ENCODE measurements at regions of chrX and their contacts with region 1.

Region 1: GRCh38 chrX:12984629-12985319 is 9.9 kb downstream of the TMSB4X start:
- DNase-seq: peak in 10 of 14 experiments; percentile 35 to 80 (median 52)
- ATAC-seq: peak; percentile 77
- H3K4me3 ChIP-seq: peak overlapping the region; percentile 12
- H3K4me3 Mint-ChIP-seq: peak overlapping the region; percentile 82
- H3K27ac ChIP-seq: peak overlapping the region; percentile 66 to 69
- H3K27ac Mint-ChIP-seq: peak overlapping the region; percentile 95
- H3K4me1 ChIP-seq: peaks cover 80% of the 10 kb centered on the region
- H3K4me1 Mint-ChIP-seq: peaks cover 76% of the 10 kb centered on the region
- H3K27me3 ChIP-seq: no peaks in the 10 kb centered on the region
- H3K27me3 Mint-ChIP-seq: no peaks in the 10 kb centered on the region
- CTCF ChIP-seq: no peak

Region 2: DNA sequence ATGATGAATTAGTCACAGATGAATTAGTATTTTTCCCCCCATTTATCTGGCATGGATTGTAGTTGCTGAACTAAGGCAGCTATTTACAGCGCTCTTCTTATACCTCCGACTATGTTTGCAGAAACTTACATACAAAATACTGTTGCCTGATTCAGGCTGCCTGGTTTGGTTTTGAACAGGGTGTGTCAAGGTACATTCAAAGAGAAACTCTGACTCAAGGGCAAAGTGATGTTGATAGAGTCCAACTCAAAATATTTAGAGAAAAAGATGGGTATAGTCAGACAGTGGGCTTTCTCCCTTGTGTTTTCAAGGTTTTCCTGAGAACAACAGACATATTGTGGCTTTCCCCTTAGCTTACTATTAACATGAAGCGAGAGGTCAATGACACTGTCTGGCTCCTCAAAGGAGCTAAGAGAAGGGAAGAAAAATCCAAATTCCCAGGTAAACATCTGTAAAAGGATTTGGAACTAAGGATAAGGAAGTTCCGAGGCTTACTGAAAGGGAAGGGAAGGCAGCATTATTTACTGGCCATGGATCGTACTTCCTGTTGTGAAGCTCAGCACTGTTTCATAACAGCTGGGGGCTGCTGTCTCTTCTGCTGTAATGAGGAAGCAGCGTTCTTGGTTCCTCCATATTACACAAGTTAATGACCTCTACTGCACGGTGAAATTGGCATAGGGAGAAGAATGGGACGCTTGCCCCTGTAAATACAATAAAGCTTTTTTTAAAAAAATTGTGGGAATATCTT is 28.8 kb after region 1 on chrX:
- CTCF ChIA-PET with region 1: no interaction called
- POLR2A ChIA-PET with region 1: interaction called, 502 read pairs
- intact Hi-C with region 1: loop called (anchors 5 kb)
- DNase-seq: peak in 7 of 14 experiments; percentile 8 to 66 (median 43)
- ATAC-seq: peak; percentile 84
- H3K4me3 ChIP-seq: peak overlapping the region; percentile 9
- H3K4me3 Mint-ChIP-seq: peak overlapping the region; percentile 68
- H3K27ac ChIP-seq: peak overlapping the region; percentile 63 to 66
- H3K27ac Mint-ChIP-seq: peak overlapping the region; percentile 88
- H3K4me1 ChIP-seq: peaks cover 45% of the 10 kb centered on the region
- H3K4me1 Mint-ChIP-seq: peaks cover 76% of the 10 kb centered on the region
- H3K27me3 ChIP-seq: no peaks in the 10 kb centered on the region
- H3K27me3 Mint-ChIP-seq: no peaks in the 10 kb centered on the region
- CTCF ChIP-seq: no peak

Region 3: DNA sequence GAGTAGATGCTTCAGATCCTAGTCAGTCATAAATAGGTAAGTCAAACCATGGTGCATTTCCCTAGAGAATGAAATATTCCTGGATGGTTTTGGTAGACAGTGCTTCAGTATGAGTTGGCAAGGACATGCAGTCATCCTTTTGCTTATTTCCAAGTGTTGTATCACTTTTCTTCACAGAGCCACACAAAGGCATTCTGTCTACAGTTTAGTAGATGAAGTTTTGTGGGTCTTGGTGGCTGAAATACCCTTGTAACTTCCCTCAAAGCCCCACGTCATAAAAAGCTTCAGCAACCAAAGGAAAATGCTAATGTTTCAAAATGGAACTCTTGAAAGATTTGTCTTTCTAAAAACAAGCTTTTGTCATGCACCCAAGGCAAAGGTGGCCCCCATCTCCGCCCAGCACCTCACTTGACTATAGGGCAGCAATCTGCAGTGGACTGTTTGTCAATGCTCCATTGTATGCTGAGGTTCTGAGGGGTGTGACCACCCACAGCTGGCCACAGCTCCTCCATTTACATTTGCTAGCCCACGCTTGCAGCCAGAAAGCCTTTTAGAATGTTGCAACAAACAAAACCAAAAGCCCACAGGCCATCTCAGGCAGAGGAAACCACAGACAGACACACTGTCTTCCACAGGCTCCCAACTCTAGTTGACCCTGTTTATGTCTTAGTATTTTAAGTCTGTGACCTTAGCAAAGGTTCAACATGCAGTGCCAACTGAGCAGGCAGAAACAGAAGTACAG is 146.8 kb after region 1 on chrX:
- CTCF ChIA-PET with region 1: no interaction called
- POLR2A ChIA-PET with region 1: no interaction called
- intact Hi-C with region 1: no loop called
- DNase-seq: peak in 6 of 14 experiments; percentile 2 to 56 (median 33)
- ATAC-seq: peak; percentile 93
- H3K4me3 ChIP-seq: no peak overlapping the region
- H3K4me3 Mint-ChIP-seq: peak overlapping the region; percentile 7
- H3K27ac ChIP-seq: no peak overlapping the region
- H3K27ac Mint-ChIP-seq: peak overlapping the region; percentile 81
- H3K4me1 ChIP-seq: peaks cover 5% of the 10 kb centered on the region
- H3K4me1 Mint-ChIP-seq: peaks cover 36% of the 10 kb centered on the region
- H3K27me3 ChIP-seq: no peaks in the 10 kb centered on the region
- H3K27me3 Mint-ChIP-seq: no peaks in the 10 kb centered on the region
- CTCF ChIP-seq: no peak

Region 4: GRCh38 chrX:14274691-14275090 is 1289.9 kb after region 1 on chrX:
- CTCF ChIA-PET with region 1: no interaction called
- POLR2A ChIA-PET with region 1: no interaction called
- intact Hi-C with region 1: no loop called
- DNase-seq: no peak
- ATAC-seq: no peak
- H3K4me3 ChIP-seq: no peak overlapping the region
- H3K4me3 Mint-ChIP-seq: no peak overlapping the region
- H3K27ac ChIP-seq: no peak overlapping the region
- H3K27ac Mint-ChIP-seq: no peak overlapping the region
- H3K4me1 ChIP-seq: no peaks in the 10 kb centered on the region
- H3K4me1 Mint-ChIP-seq: no peaks in the 10 kb centered on the region
- H3K27me3 ChIP-seq: no peaks in the 10 kb centered on the region
- H3K27me3 Mint-ChIP-seq: no peaks in the 10 kb centered on the region
- CTCF ChIP-seq: no peak

Measured in CD4-positive, alpha-beta T cell (primary cell).